ENCODE measurements at regions of chr11 and their contacts with region 1.

Region 1: GRCh38 chr11:128879817-128880216 is 11.3 kb upstream of the KCNJ5 start:
- DNase-seq: no peak
- H3K4me3 ChIP-seq: no peak overlapping the region
- H3K27ac ChIP-seq: no peak overlapping the region
- H3K4me1 ChIP-seq: peaks cover 0 to 6% (median 3%) of the 10 kb centered on the region in 4 experiments; a peak in 4 of 7 replicates
- H3K27me3 ChIP-seq: peaks cover 0 to 7% (median 1%) of the 10 kb centered on the region in 4 experiments; a peak in 5 of 7 replicates
- CTCF ChIP-seq: no peak
- EP300 ChIP-seq: no peak
- POLR2A ChIP-seq: no peak
- RAD21 ChIP-seq: no peak

Region 2: DNA sequence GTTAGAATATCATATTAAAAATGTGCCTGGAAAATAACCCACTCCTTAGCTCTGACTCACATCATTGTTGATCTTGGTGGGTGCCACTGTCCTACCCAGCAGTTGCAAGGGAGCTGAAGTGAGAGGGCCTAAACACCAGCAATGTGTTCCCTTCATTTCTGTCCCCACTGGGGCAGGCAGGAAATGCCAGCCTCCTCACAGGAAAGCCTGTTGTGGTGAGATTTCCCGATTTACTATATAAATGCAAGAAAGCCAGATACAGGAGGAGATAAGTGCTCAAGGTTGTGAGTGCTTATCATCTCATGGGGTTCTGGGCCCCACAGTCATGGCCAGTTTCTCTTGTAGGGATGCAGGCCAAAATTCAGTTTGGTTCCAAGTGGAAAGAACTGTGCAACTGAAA is 201.8 kb before region 1 on chr11:
- CTCF ChIA-PET with region 1: no interaction called
- POLR2A ChIA-PET with region 1: no interaction called
- DNase-seq: no peak
- H3K4me3 ChIP-seq: no peak overlapping the region
- H3K27ac ChIP-seq: no peak overlapping the region
- H3K4me1 ChIP-seq: no peaks in the 10 kb centered on the region; a peak in 1 of 7 replicates
- H3K27me3 ChIP-seq: peaks cover 8 to 21% (median 15%) of the 10 kb centered on the region in 4 experiments
- CTCF ChIP-seq: no peak
- EP300 ChIP-seq: no peak
- POLR2A ChIP-seq: no peak
- RAD21 ChIP-seq: no peak

Region 3: GRCh38 chr11:128841461-128842072 is 38.2 kb before region 1 on chr11:
- CTCF ChIA-PET with region 1: no interaction called
- POLR2A ChIA-PET with region 1: no interaction called
- DNase-seq: no peak
- H3K4me3 ChIP-seq: no peak overlapping the region
- H3K27ac ChIP-seq: no peak overlapping the region
- H3K4me1 ChIP-seq: peaks cover 0 to 6% (median 0%) of the 10 kb centered on the region in 4 experiments; a peak in 2 of 7 replicates
- H3K27me3 ChIP-seq: no peaks in the 10 kb centered on the region; a peak in 1 of 7 replicates
- CTCF ChIP-seq: no peak
- EP300 ChIP-seq: no peak
- POLR2A ChIP-seq: no peak
- RAD21 ChIP-seq: no peak

Region 4: GRCh38 chr11:128868841-128869580 is 10.8 kb before region 1 on chr11:
- CTCF ChIA-PET with region 1: interaction called, 35 read pairs
- POLR2A ChIA-PET with region 1: no interaction called
- DNase-seq: no peak
- H3K4me3 ChIP-seq: no peak overlapping the region
- H3K27ac ChIP-seq: no peak overlapping the region
- H3K4me1 ChIP-seq: peaks cover 17 to 35% (median 23%) of the 10 kb centered on the region in 4 experiments
- H3K27me3 ChIP-seq: peaks cover 0 to 8% (median 7%) of the 10 kb centered on the region in 4 experiments; a peak in 3 of 7 replicates
- CTCF ChIP-seq: no peak
- EP300 ChIP-seq: no peak
- POLR2A ChIP-seq: no peak
- RAD21 ChIP-seq: no peak

Region 5: GRCh38 chr11:128948589-128948988 is 68.8 kb after region 1 on chr11:
- CTCF ChIA-PET with region 1: interaction called, 473 read pairs
- POLR2A ChIA-PET with region 1: interaction called, 5 read pairs
- DNase-seq: no peak
- H3K4me3 ChIP-seq: no peak overlapping the region
- H3K27ac ChIP-seq: no peak overlapping the region
- H3K4me1 ChIP-seq: no peaks in the 10 kb centered on the region
- H3K27me3 ChIP-seq: peaks cover 0 to 2% (median 0%) of the 10 kb centered on the region in 4 experiments; a peak in 3 of 7 replicates
- CTCF ChIP-seq: peak; percentile 67 to 73 (median 71)
- EP300 ChIP-seq: no peak
- POLR2A ChIP-seq: no peak
- RAD21 ChIP-seq: peak; percentile 73 to 79

Region 6: GRCh38 chr11:128956401-128957201 is 76.8 kb after region 1 on chr11:
- CTCF ChIA-PET with region 1: interaction called, 473 read pairs
- POLR2A ChIA-PET with region 1: no interaction called
- DNase-seq: no peak
- H3K4me3 ChIP-seq: no peak overlapping the region
- H3K27ac ChIP-seq: no peak overlapping the region
- H3K4me1 ChIP-seq: no peaks in the 10 kb centered on the region
- H3K27me3 ChIP-seq: peaks cover 0 to 2% (median 0%) of the 10 kb centered on the region in 4 experiments; a peak in 2 of 7 replicates
- CTCF ChIP-seq: peak in 2 of 3 experiments; percentile 79 to 86; a peak in 3 of 4 replicates
- EP300 ChIP-seq: no peak
- POLR2A ChIP-seq: no peak
- RAD21 ChIP-seq: peak; percentile 89 to 90

Region 7: DNA sequence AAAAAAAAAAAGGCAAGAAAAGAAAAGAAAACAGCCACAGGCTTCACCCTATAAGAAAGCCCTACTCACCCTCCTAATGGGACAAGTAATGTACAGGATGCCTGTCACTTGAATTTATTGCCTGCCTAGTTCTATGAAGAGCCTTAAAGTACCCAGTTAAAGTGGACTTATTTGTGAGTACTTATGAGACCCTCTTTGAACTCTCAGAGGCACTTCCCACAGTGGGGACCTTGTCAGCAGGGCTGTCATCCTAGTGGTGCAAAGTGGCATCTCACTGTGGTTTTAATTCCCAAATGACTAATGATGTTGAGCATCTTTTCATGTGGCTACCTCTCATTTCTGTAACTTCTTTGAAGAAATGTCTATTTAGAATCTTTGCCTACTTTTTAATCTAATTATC is 454.1 kb after region 1 on chr11:
- CTCF ChIA-PET with region 1: no interaction called
- POLR2A ChIA-PET with region 1: no interaction called
- DNase-seq: no peak
- H3K4me3 ChIP-seq: no peak overlapping the region
- H3K27ac ChIP-seq: no peak overlapping the region
- H3K4me1 ChIP-seq: peaks cover 0 to 1% (median 0%) of the 10 kb centered on the region in 4 experiments; a peak in 1 of 7 replicates
- H3K27me3 ChIP-seq: no peaks in the 10 kb centered on the region
- CTCF ChIP-seq: peak in 2 of 3 experiments; percentile 10 to 28; a peak in 2 of 4 replicates
- EP300 ChIP-seq: no peak
- POLR2A ChIP-seq: no peak
- RAD21 ChIP-seq: no peak